Activated CD4-positive, alpha-beta T cell treated with anti-CD3 and anti-CD28 coated beads for 36 hours (primary cell): ENCODE measurements at regions of chr5 and their contacts with region 1.

Region 1: DNA sequence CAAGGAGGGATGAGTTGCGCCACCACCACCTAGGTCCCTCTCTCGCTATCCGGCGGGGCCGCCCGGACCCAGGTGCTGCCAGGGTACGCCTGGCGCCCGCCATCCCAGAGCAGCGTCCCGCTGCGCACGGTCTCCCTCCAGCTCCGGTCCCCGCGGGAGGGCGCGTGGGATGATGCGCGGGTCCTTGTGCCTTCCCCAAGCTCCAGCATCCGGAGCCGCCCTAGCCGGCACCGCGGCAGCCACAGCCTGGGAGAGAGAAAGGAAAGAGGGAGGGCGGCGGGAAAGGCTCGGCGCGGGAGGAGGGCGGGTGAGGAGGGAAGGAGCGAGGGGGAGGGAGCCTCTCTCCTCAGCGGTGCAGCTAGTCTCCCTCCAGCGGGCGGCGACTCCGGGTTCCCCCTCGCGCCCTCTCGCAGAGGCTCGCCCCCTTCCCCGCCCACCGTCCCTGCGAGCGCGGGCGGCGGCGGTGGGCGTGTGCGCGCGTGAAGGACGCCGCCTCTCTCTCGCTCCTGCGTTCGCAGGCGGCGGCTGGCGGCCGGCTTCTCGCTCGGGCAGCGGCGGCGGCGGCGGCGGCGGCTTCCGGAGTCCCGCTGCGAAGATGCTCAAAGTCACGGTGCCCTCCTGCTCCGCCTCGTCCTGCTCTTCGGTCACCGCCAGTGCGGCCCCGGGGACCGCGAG is at the start of gene CAMK4:
- DNase-seq: peak; percentile 81
- ATAC-seq: peak; percentile 57
- H3K4me3 Mint-ChIP-seq: peak within 1 kb of the TSS; percentile 97
- H3K27ac Mint-ChIP-seq: peak within 1 kb of the TSS; percentile 87
- H3K4me1 Mint-ChIP-seq: peaks cover 25% of the 10 kb centered on the region
- H3K27me3 Mint-ChIP-seq: no peaks in the 10 kb centered on the region
- total RNA-seq, gene CAMK4: 49.4 to 53.1 TPM

Region 2: DNA sequence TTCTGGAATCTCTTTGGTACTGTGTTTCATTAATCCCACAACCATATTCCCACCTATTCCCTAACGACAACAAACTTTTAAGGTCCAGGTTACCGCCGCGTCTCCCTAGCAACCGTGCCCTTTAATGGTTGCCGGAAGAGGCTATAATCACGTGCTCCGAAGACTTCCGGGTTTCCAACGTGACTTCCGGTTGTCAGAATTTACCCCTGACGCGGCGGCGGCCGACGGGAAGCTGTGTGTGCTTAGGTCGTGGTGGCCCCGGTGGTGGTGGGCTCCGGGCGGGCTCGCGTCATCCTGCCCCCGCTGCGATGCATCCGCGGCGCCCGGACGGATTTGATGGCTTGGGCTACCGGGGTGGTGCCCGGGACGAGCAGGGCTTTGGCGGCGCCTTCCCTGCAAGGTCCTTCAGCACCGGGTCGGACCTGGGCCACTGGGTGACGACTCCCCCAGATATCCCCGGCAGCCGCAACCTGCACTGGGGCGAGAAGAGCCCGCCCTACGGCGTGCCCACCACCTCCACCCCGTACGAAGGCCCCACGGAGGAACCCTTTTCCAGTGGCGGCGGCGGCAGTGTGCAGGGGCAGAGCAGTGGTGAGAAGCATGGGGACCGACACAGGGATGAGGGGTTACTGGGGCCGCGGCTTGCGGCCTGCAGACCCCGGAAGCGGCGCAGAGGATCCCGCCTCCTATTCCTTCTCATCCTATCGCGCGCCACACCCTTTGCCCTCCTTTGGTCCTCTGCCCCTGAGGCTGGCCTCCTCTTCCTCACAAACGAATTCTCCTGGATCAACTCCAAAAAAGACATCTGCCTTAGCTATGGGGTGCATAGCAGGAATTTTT is 485.0 kb before region 1 on chr5 and contains the start of gene SLC25A46:
- CTCF ChIA-PET with region 1: no interaction called
- POLR2A ChIA-PET with region 1: no interaction called
- intact Hi-C with region 1: loop called in 1 of 2 experiments (anchors 10 kb)
- DNase-seq: peak; percentile 92
- ATAC-seq: peak; percentile 89
- H3K4me3 Mint-ChIP-seq: peak within 1 kb of the TSS; percentile 87
- H3K27ac Mint-ChIP-seq: peak within 1 kb of the TSS; percentile 91
- H3K4me1 Mint-ChIP-seq: peaks cover 17% of the 10 kb centered on the region
- H3K27me3 Mint-ChIP-seq: peaks cover 4% of the 10 kb centered on the region
- total RNA-seq, gene SLC25A46: 32.3 to 35.3 TPM

Region 3: GRCh38 chr5:111158105-111158744 is 65.8 kb before region 1 on chr5:
- CTCF ChIA-PET with region 1: interaction called, 18 read pairs
- POLR2A ChIA-PET with region 1: no interaction called
- intact Hi-C with region 1: loop called (anchors 1 to 5 kb)
- DNase-seq: peak; percentile 88
- ATAC-seq: peak; percentile 67
- H3K4me3 Mint-ChIP-seq: no peak overlapping the region
- H3K27ac Mint-ChIP-seq: no peak overlapping the region
- H3K4me1 Mint-ChIP-seq: peaks cover 11% of the 10 kb centered on the region
- H3K27me3 Mint-ChIP-seq: no peaks in the 10 kb centered on the region

Region 4: DNA sequence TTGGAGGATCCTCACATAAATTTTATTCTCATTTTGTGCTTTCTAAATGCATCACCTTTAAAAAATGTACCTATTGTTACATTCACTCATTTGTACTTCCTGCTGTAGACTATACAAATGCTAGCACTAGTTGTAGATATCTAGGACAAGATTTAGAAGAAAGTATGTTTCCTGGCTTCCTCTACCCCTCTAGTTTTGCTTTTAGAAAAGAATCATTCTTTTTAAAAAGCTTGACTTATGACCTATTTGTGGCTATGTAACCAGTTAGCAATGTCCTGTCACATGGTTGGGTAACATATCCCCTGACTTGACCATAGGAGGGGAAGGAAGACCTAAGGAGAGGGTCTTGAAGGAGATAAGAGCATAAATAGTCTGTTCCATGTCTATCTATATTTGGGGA is 13.4 kb after region 1 on chr5:
- CTCF ChIA-PET with region 1: interaction called, 19 read pairs
- POLR2A ChIA-PET with region 1: interaction called, 29 read pairs
- intact Hi-C with region 1: loop called (anchors 1 kb)
- DNase-seq: no peak
- ATAC-seq: peak; percentile 35
- H3K4me3 Mint-ChIP-seq: peak overlapping the region; percentile 63
- H3K27ac Mint-ChIP-seq: peak overlapping the region; percentile 93
- H3K4me1 Mint-ChIP-seq: peaks cover 94% of the 10 kb centered on the region
- H3K27me3 Mint-ChIP-seq: no peaks in the 10 kb centered on the region

Region 5: GRCh38 chr5:111278845-111279504 is 54.9 kb after region 1 on chr5:
- CTCF ChIA-PET with region 1: interaction called, 35 read pairs
- POLR2A ChIA-PET with region 1: interaction called, 4 read pairs
- intact Hi-C with region 1: loop called (anchors 1 to 2 kb)
- DNase-seq: peak; percentile 93
- ATAC-seq: peak; percentile 97
- H3K4me3 Mint-ChIP-seq: no peak overlapping the region
- H3K27ac Mint-ChIP-seq: peak overlapping the region; percentile 79
- H3K4me1 Mint-ChIP-seq: peaks cover 69% of the 10 kb centered on the region
- H3K27me3 Mint-ChIP-seq: no peaks in the 10 kb centered on the region

Region 6: DNA sequence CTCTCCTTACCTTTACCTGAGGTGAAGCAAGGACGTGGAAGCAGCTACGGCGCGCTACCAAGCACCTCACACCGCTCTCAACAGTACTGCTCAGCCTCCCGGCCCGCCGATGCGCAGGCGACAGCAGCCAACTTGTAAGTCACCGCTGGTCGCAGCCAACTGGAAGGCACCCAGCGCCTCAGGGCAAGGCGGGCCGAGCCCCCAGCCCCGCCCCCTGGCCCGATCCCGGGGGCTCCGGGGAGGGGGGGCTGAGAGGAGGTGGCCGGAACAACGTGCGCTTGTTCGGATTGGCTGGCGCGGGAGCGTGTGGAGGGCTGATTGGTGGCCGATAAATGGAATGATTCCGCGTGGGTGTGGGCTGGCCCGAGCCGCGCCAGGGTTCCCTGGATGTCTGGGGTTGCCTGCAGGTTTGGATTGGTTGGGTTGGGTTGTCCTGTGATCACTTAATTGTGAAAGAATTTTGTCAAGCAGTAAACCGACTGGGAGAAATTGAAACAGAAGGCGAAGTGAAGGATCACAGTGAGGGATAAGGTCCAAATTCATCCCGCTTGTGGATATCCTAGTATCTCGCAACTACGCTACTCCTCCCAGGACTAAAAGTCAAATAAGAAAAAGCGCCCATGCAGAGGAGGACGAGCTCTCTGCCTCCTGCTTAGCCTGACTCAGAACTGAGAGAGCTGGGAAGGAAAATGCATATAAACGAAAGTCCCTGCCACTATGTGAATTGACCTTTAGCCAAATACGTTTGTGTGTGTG is 288.5 kb after region 1 on chr5 and contains the start of gene STARD4:
- CTCF ChIA-PET with region 1: interaction called, 3 read pairs
- POLR2A ChIA-PET with region 1: no interaction called
- intact Hi-C with region 1: loop called (anchors 1 to 2 kb)
- DNase-seq: peak; percentile 97
- ATAC-seq: peak; percentile 94
- H3K4me3 Mint-ChIP-seq: peak within 1 kb of the TSS; percentile 99
- H3K27ac Mint-ChIP-seq: peak within 1 kb of the TSS; percentile 96
- H3K4me1 Mint-ChIP-seq: peaks cover 42% of the 10 kb centered on the region
- H3K27me3 Mint-ChIP-seq: no peaks in the 10 kb centered on the region
- total RNA-seq, gene STARD4: 54.2 to 55.3 TPM

Region 7: DNA sequence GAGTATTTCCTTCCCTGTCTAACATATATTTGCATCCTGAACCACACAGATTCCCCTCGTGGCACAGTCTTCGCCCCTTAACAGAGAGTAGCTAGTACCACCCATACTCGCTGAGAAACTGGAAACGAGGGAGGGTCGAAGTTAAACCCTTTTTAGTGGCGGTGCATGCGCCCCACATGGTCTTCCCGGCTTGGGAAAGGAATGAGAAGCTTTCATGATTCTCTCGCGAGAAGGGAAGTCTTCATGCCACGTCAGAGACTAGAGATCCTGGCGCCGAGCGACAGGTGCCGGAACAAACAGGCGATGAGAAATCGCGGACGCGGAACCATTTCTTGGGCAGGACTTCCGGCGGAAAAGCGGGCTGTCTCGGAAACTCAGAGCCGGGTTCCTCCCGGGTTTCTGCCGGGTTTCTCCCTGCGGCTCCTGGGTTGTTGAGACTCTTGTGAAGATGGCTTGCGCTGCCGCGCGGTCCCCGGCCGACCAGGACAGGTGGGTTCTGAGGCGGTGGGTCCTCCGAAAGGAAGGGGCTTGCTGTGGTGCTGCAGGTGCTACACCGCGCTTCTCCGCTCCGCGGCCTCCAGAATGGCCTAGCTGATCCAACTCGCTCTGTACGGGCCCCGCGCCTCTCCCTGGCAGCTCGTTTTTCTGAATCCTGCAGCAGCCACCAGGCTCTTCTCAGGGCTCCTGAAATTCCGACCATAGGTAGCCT is 1637.1 kb after region 1 on chr5 and contains the start of gene SRP19:
- CTCF ChIA-PET with region 1: no interaction called
- POLR2A ChIA-PET with region 1: no interaction called
- intact Hi-C with region 1: loop called in 1 of 2 experiments (anchors 10 kb)
- DNase-seq: peak; percentile 95
- ATAC-seq: peak; percentile 95
- H3K4me3 Mint-ChIP-seq: peak within 1 kb of the TSS; percentile 97
- H3K27ac Mint-ChIP-seq: peak within 1 kb of the TSS; percentile 98
- H3K4me1 Mint-ChIP-seq: peaks cover 32% of the 10 kb centered on the region
- H3K27me3 Mint-ChIP-seq: peaks cover 9% of the 10 kb centered on the region
- total RNA-seq, gene SRP19: 47.6 to 49.4 TPM